ENCODE measurements at regions of chr12 and their contacts with region 1.

Region 1: DNA sequence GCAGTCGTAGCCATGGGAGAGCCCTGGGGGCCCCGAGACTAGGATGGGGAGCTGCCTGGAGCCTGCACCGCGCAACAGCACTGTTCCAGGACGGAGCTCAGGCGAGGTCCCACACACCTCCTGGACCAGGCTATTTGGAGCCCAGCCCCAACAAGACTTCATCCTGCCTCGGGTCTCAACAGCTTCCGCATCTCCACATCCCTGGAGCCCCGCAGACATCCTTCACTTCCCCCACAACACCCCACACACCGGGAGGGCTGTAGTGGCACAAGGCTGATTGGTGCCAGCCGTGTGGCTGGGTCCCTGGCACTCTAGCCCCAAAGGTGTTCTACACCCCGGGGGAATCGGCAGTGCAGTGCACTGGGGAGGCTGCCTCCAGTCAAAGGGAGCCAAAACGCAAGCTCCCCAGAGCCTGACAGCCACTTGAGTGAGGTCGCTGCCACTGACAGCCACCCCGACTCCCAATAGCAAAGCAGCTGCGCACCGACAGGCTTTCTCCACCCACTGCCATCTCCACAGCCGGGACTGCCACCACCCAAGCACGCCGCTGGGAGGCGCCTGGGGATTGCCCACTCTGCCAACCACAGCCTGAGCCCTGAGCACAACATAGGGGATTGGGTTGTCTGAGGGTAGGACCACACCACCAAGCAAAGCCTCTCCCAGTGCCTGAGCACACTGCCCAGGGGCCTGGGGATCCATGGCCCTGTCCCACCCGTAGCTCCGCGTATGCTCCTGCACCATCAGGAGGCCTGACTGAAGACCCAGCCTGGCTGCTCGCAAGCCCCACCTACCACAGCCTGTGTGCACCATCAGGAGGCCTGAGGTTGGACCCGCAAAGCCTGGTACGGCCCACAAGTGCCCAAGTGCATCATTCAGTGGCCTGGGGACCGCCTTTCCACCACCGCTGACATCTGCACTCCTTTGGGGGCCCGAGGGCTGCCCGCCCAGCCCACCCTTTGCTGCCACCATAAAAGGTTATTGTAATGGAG is 13.2 kb upstream of the KLRF1 start:
- DNase-seq: no peak
- H3K4me3 ChIP-seq: no peak overlapping the region
- H3K27ac ChIP-seq: no peak overlapping the region
- H3K27me3 ChIP-seq: no peaks in the 10 kb centered on the region
- CTCF ChIP-seq: peak; percentile 79

Region 2: GRCh38 chr12:9786726-9787717 is 27.1 kb before region 1 on chr12:
- CTCF ChIA-PET with region 1: no interaction called
- POLR2A ChIA-PET with region 1: no interaction called
- DNase-seq: no peak
- H3K4me3 ChIP-seq: no peak overlapping the region
- H3K27ac ChIP-seq: no peak overlapping the region
- H3K27me3 ChIP-seq: no peaks in the 10 kb centered on the region
- CTCF ChIP-seq: no peak

Region 3: GRCh38 chr12:9797722-9798619 is 16.1 kb before region 1 on chr12:
- CTCF ChIA-PET with region 1: interaction called, 10 read pairs
- POLR2A ChIA-PET with region 1: no interaction called
- DNase-seq: no peak
- H3K4me3 ChIP-seq: no peak overlapping the region
- H3K27ac ChIP-seq: no peak overlapping the region
- H3K27me3 ChIP-seq: no peaks in the 10 kb centered on the region
- CTCF ChIP-seq: peak; percentile 29

Region 4: DNA sequence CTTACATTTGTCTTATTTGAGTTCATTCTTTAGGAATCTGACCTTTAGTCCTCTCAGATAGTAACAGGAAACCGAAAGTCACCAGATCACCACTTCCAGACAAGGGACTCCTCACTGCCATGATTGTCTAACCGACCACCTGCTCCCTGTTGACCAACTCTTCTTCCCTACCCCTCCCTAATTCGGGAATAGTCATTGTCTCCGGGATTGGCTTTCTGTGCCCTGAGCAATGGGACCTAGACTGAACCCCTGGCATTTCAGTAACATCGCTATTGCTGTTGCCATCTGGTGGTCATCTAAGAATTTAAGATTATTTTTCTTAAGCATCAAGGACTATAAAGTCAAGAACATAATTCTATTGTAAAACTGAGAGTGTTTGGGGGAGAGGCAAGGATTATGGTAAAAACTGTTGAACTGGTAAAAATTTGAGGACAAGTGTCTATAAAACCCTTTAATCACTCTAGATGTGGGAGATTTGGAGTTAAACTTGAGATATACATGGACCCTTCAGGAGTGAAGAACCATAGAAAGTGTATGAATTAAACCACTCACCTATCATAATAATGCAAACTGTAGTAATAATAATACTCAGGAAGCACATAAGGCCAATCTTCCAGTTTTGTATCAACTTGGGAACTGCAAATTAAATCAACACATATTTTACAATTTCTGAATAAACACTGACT is 111.7 kb after region 1 on chr12:
- CTCF ChIA-PET with region 1: interaction called, 13 read pairs
- POLR2A ChIA-PET with region 1: no interaction called
- DNase-seq: peak; percentile 6
- H3K4me3 ChIP-seq: no peak overlapping the region
- H3K27ac ChIP-seq: no peak overlapping the region
- H3K27me3 ChIP-seq: no peaks in the 10 kb centered on the region
- CTCF ChIP-seq: peak; percentile 63

Measured in AG04450 (cell line).